Activated CD8-positive, alpha-beta memory T cell treated with anti-CD3 and anti-CD28 coated beads, Interleukin-2, amount 10 ng/mL, durations not matched to agents 7 days and 5 days (primary cell): ENCODE measurements at regions of chr9 and their contacts with region 1.

Region 1: GRCh38 chr9:70111042-70111602 is 67.5 kb downstream of the MAMDC2 start:
- DNase-seq: peak; percentile 65
- ATAC-seq: no peak
- H3K4me3 Mint-ChIP-seq: no peak overlapping the region
- H3K27ac Mint-ChIP-seq: no peak overlapping the region
- H3K4me1 Mint-ChIP-seq: peaks cover 5% of the 10 kb centered on the region
- H3K27me3 Mint-ChIP-seq: peaks cover 21% of the 10 kb centered on the region

Region 2: DNA sequence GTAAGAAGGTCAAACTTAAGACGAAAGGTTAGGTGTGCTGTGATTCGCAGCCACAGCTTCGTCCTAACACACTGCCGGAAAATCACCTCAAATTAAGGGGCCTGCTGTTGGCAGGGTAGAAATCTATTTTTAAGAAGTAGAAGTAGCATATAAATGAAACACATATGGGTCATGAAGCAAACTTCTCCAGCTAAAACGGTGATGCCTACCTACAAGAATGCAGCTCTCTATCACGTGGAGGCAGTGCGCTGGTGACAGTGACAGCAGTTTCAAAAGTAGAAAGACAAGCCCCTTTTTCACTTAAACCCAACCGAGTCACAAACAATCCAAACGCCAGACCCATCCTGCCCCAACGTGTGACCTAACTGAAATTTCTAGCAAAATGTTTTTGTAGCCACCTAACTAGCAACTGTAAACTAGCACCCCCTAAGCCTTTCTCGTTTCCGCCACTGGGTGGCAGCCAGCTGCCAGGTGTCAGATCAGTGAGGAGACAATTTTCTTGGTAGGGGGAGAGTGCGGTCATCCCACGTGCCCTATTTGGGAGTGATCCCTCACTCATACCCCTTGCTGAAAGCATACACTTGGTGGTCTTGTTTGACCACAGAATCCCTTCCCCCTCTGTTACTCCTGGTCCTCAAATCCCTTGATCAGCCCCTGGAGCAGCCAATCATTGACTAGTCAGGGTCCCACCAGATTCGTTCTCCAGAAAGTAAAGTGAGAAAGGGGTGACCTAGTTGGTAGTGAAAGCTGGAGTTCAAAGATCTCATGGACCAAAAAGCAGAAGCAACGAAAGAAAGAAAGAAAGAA is 139.3 kb before region 1 on chr9:
- CTCF ChIA-PET with region 1: interaction called, 74 read pairs
- DNase-seq: peak; percentile 63
- ATAC-seq: no peak
- H3K4me3 Mint-ChIP-seq: no peak overlapping the region
- H3K27ac Mint-ChIP-seq: no peak overlapping the region
- H3K4me1 Mint-ChIP-seq: no peaks in the 10 kb centered on the region
- H3K27me3 Mint-ChIP-seq: peaks cover 9% of the 10 kb centered on the region